ENCODE measurements at regions of chr5 and their contacts with region 1.

Region 1: DNA sequence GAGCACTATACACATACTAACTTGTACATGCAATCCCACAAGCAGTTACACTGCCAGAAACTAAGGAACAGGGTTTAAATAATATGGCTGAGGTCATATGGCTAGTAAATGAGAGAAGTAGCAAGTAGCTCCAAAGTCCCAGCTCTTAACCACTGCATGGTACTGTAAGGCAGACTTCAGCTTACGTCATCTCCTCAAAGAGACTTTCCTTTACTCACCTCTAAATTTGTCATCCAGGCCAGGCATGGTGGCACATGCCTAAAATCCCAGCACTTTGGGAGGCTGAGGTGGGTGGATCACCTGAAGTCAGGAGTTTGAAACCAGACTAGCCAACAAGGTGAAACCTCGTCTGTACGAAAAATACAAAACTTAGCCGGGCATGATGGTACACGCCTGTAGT is 20.4 kb upstream of the SELENOP start:
- DNase-seq: no peak
- ATAC-seq: no peak
- H3K4me3 ChIP-seq: no peak overlapping the region
- H3K27ac ChIP-seq: no peak overlapping the region
- H3K4me1 ChIP-seq: peaks cover 0 to 4% of the 10 kb centered on the region in 2 experiments; a peak in 3 of 5 replicates
- H3K27me3 ChIP-seq: no peaks in the 10 kb centered on the region
- CTCF ChIP-seq: no peak
- EP300 ChIP-seq: no peak
- POLR2A ChIP-seq: no peak
- RAD21 ChIP-seq: no peak

Region 2: DNA sequence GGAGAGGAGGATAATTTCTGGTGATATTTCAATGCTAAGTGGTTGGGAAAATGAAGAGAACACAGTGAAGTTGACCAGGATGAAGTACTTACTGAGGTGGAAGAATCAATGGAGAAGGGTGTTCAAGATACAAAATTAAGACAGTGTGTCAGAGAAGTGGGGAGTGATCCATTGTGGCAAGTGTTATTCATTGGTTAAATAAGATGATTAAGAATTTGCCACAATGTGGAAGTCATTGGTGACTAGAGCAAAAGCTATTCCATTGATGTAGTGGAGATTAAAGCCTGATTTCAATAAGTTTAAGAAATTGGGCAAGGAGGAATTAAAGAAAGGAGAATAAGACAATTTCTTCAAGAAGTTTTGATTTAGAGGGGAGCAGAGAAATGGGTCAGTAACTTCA is 290.0 kb before region 1 on chr5:
- CTCF ChIA-PET with region 1: no interaction called
- POLR2A ChIA-PET with region 1: no interaction called
- in situ Hi-C with region 1: no loop called
- intact Hi-C with region 1: no loop called
- DNase-seq: no peak
- ATAC-seq: no peak
- H3K4me3 ChIP-seq: no peak overlapping the region
- H3K27ac ChIP-seq: no peak overlapping the region
- H3K4me1 ChIP-seq: no peaks in the 10 kb centered on the region
- H3K27me3 ChIP-seq: no peaks in the 10 kb centered on the region
- CTCF ChIP-seq: no peak
- EP300 ChIP-seq: no peak
- POLR2A ChIP-seq: no peak
- RAD21 ChIP-seq: no peak

Region 3: DNA sequence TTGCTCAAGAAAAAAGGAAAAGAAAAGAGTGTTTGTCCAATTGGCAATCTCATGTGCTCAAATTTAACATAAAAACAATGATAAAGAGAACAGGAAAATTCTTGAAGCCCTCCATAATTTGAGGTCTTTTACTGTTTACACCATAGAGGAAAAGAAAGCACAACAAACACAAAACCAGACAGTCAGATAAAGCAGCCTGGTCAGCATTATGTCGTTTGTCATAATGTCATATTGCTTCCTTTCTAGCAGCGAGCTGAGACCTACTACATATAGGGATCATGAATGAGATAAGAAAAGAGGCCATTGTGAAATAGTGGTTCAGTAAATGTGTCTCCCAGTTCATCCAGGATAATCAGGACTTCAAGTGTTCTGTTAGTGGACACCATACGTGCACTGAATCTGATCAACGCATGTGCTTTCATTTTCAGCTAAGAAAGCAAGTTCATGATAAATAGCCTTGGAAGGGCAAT is 44.4 kb after region 1 on chr5:
- CTCF ChIA-PET with region 1: no interaction called
- POLR2A ChIA-PET with region 1: no interaction called
- in situ Hi-C with region 1: no loop called
- intact Hi-C with region 1: loop called (anchors 5 kb)
- DNase-seq: peak in 2 of 4 experiments; percentile 75 to 76
- ATAC-seq: peak; percentile 81
- H3K4me3 ChIP-seq: no peak overlapping the region
- H3K27ac ChIP-seq: 0 out of 3 replicates have a peak overlapping the region, but pooled peaks have one; percentile 1
- H3K4me1 ChIP-seq: peaks cover 17 to 35% of the 10 kb centered on the region in 2 experiments; a peak in 4 of 5 replicates
- H3K27me3 ChIP-seq: no peaks in the 10 kb centered on the region
- CTCF ChIP-seq: no peak
- EP300 ChIP-seq: peak; percentile 86
- POLR2A ChIP-seq: no peak
- RAD21 ChIP-seq: no peak; a peak in 2 of 4 replicates

Measured in K562 (cell line).